Activated CD4-positive, alpha-beta memory T cell treated with anti-CD3 and anti-CD28 coated beads for 36 hours (primary cell): ENCODE measurements at regions of chr22 and their contacts with region 1.

Region 1: DNA sequence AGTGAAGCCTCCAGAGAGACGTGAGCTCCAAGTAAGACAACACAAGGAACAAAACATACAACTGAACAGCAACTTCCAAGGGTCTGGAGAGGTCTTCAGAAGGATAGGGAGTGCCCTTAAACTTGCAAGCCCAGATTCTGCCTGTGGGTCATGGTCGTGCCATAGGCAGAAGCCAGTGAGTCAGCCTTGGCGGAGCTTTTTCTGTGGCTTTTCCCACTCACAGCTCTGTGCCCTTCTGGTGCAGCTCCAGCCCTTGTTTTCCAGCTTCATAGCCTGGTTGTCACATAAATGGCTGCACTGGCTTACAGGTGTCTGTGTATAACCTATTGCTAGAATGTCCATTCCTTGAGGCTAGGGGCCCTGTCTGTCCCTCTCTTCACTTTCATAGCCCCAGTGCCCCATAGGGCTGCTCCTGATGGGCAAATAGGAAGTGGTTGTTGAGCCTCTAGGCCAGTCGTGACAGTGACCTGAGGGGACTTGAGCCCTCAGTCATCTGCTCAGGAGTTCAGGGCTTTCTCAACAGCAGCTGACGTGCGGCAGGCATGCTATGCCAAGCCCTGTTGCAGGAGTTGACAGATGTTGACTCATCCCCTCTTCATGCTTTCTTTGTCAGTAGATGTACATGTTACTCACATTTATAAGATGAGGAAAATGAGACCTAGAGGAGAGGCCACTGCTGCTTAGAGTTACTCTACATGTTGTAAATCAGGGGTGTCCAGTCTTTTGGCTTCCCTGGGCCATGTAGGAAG is 7.4 kb downstream of the MED15 start:
- DNase-seq: peak; percentile 29
- H3K4me3 Mint-ChIP-seq: no peak overlapping the region
- H3K27ac Mint-ChIP-seq: no peak overlapping the region
- H3K4me1 Mint-ChIP-seq: peaks cover 78% of the 10 kb centered on the region
- H3K27me3 Mint-ChIP-seq: no peaks in the 10 kb centered on the region

Region 2: DNA sequence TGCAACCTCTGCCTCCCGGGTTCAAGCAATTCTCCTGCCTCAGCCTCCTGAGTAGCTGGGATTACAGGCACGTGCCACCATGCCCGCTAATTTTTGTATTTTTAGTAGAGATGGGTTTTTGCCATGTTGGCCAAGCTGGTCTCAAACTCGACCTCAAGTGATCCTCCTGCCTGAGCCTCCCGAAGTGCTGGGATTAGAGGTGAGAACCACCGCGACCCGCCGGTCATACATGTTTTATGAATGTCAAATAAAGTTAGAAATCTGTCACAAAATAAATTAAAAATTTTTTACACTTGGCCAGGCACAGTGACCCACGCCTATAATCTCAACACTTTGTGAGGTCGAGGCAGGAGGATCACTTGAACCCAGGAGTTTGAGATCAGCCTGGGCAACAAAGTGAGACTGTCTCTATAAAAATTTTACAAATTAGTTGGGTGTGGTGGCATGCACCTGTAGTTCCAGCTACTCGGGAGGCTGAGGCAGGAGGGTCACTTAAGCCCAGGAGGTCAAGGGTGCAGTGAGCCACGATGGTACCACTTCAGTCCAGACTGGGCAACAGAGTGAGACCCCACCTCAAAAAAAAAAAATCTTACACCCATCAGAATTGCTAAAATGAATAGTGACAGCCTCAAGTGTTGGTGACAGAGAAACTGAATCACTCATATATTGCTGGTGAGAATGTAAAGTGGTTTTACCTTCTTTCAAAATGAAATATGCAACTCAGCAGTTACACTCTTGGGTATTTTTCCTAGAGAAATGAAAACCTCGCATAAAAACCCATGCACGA is 47.8 kb after region 1 on chr22:
- CTCF ChIA-PET with region 1: interaction called, 41 read pairs
- POLR2A ChIA-PET with region 1: no interaction called
- intact Hi-C with region 1: no loop called
- DNase-seq: no peak
- H3K4me3 Mint-ChIP-seq: no peak overlapping the region
- H3K27ac Mint-ChIP-seq: peak overlapping the region; percentile 78
- H3K4me1 Mint-ChIP-seq: peaks cover 62% of the 10 kb centered on the region
- H3K27me3 Mint-ChIP-seq: no peaks in the 10 kb centered on the region

Region 3: DNA sequence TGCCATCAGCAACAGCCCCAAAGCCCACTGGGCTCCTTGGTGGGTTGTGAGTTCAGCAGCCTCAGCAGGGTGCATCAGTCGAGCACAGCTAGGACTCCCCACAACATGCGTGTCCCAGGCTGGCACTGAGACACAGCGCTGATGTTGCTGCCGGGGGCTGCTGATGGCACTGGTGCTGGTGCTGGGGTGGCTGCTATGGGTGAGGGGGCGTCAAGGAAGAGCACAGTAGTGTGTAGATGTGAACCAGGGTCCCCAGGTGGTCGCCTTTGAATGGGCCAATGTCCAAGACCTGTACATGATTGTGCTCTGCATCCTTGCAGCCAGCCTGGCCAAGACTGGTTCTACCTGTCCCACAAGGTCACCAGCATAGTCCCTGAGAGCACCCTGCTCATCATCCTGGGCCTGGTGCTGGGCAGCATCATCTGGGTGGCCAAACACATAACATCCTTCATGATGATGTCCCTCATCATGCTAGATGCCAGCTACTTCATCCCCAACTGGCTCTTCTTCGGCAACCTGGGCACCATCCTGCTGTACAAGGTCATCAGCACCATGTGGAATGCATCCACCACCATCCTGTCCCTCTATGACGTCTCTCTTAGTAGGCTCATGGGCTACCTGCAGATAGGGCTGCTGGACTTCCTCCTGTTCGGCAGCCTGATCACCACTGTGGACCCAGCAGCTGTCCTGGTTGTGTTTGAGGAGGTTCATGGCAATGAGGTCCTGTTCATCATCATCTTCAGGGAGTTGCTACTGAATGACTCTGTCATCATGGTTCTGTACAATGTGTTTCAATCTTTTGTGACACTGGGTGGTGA is 138.0 kb after region 1 on chr22:
- CTCF ChIA-PET with region 1: no interaction called
- POLR2A ChIA-PET with region 1: no interaction called
- intact Hi-C with region 1: no loop called
- DNase-seq: no peak
- H3K4me3 Mint-ChIP-seq: no peak overlapping the region
- H3K27ac Mint-ChIP-seq: no peak overlapping the region
- H3K4me1 Mint-ChIP-seq: no peaks in the 10 kb centered on the region
- H3K27me3 Mint-ChIP-seq: no peaks in the 10 kb centered on the region